AG04450 (cell line): ENCODE measurements at regions of chr3 and their contacts with region 1.

Region 1: DNA sequence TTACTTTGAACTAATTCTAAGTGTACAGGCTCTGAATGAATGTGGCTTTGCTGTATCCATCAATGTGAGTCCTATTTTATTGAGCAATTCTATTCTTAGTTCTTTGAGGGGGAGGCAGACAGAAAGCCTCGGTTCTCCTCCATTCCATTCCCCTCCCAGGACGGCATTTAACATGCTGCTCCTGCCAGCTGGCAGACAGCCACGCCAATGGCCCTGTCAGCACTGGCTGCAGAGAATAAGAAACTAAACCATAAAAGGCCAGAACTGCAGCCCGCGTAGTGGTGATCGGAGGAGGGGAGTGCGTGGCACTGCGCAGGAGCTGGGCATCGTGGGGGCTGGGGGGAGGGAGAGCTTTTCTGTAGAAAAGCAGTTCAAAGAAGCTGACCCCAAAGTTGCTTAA is 76.0 kb upstream of the HACD2 start:
- DNase-seq: peak; percentile 94
- H3K4me3 ChIP-seq: no peak overlapping the region
- H3K27ac ChIP-seq: peak overlapping the region; percentile 83
- H3K27me3 ChIP-seq: no peaks in the 10 kb centered on the region
- CTCF ChIP-seq: no peak

Region 2: DNA sequence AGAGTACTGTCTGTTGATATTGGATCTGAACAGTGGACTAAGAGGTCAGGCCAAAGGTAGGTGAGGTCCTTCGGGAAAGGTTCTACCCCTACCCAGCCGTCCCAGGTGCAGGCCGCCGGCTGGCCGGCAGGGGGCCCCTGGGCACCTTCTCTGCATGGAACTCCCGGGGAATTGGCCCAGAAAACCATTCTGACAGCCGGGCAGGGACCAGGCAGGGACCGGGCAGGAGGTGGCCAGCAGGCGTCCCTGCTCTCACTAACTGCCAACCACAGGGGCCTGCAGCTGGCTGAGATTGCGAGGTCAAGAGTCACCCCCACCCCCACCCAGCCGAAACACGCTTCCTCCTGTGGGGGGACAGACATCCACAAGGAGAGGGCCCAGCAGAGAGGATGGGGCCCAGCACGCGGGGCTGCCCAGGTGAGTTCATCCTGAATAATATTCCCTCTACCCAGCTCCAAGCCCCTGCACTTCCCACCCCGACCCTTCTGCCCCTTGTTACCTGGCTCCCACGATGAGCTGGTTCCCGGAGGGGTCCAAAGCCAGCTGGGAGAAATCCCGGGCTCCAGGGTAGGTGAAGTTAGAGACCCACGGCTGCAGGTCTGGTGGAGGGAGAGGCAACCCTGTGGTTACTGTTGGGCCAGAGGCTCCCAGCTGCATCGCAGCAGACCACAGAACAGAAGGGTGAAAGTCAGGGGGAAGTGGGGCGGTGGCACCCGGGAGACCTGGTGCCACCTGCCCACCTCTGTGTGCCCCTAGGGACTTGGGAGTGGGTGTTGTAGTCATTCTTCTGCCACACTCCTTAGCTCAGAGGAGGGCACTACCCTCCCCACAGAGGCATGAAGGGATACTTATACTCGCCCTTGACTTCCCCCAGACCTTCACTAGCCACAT is 717.7 kb before region 1 on chr3:
- CTCF ChIA-PET with region 1: no interaction called
- POLR2A ChIA-PET with region 1: no interaction called
- DNase-seq: peak; percentile 11
- H3K4me3 ChIP-seq: no peak overlapping the region
- H3K27ac ChIP-seq: no peak overlapping the region
- H3K27me3 ChIP-seq: peaks cover 44% of the 10 kb centered on the region
- CTCF ChIP-seq: peak; percentile 95

Region 3: GRCh38 chr3:123552095-123552714 is 108.7 kb before region 1 on chr3:
- CTCF ChIA-PET with region 1: no interaction called
- POLR2A ChIA-PET with region 1: no interaction called
- DNase-seq: no peak
- H3K4me3 ChIP-seq: no peak overlapping the region
- H3K27ac ChIP-seq: no peak overlapping the region
- H3K27me3 ChIP-seq: no peaks in the 10 kb centered on the region
- CTCF ChIP-seq: peak; percentile 71

Region 4: DNA sequence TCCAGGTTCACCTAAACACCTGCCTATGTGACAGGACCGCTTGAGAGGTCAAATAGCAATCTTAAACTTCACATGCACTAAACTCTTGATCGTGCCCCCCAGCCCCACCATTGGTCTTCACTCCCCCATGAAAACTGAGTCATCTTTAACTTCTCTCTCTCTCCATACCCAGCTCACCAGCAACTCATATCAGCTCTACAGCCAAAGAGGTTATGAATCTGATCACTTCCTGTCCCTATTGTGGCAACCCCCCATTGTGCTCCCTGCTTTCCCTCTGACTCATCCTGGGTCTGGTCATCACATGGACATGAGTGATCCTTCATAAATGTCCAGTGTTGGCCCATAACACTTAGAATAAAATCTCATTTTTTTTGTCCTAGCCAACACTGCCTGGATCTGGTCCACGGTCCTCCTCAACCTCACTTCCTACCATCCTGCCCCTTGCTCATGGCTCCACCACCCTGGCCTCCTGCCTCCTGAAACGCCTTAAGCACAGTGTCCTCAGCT is 27.4 kb after region 1 on chr3:
- CTCF ChIA-PET with region 1: interaction called, 10 read pairs
- POLR2A ChIA-PET with region 1: interaction called, 4 read pairs
- DNase-seq: peak; percentile 69
- H3K4me3 ChIP-seq: no peak overlapping the region
- H3K27ac ChIP-seq: peak overlapping the region; percentile 82
- H3K27me3 ChIP-seq: no peaks in the 10 kb centered on the region
- CTCF ChIP-seq: no peak